Ovary (tissue), 10 donors: ENCODE measurements at regions of chr21 and their contacts with region 1.

Region 1: DNA sequence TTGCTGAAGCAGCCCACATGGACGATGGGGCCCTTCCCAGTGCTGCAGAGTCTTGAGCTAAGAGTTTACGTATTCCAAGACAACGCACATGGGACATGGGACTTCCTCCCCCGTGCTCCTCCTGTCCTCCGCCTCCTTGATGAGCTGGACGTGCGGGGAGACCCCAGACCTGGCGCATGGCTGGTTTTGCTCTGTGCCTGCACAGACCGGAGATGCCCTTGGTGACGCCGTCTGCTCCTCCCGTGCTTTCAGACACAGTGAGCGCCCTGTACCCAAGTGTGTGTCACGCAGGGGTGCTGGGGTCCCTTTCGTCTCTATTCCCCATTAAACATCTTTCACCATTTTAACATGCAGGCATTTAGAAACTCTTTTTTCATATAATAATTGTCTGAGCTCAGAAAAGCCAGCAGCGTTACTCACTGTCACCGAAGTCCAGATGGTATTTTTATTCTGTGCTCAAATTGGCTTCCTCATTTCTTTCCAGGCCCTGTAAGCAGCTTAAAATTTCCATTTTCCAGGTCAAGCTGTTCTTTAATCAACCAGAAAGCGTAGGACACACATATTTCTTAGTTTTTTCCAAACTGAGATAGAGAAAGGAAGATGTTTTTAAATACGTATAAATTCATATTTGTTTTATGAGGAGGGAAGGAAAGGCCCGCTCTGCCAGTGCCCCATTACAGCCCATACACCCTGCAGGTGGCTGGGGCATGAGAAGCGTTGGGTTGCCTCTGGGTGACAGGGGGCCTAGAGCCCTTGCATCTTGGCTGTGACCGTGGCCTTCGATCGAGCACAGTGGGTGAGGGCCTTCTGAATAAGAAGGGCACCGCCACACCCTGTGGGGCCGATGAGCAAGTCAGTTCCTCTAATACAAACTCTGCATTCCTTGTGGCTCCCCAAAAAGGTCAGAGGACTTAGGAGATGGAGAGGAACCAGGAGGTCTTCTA is 17.9 kb upstream of the ZBTB21 start:
- DNase-seq: peak in 1 of 5 donors; percentile 34
- H3K4me3 ChIP-seq: no peak overlapping the region
- H3K27ac ChIP-seq: no peak overlapping the region
- H3K4me1 ChIP-seq: peaks cover 5% of the 10 kb centered on the region
- H3K27me3 ChIP-seq: no peaks in the 10 kb centered on the region
- CTCF ChIP-seq: no peak
- EP300 ChIP-seq: no peak
- POLR2A ChIP-seq: no peak

Region 2: DNA sequence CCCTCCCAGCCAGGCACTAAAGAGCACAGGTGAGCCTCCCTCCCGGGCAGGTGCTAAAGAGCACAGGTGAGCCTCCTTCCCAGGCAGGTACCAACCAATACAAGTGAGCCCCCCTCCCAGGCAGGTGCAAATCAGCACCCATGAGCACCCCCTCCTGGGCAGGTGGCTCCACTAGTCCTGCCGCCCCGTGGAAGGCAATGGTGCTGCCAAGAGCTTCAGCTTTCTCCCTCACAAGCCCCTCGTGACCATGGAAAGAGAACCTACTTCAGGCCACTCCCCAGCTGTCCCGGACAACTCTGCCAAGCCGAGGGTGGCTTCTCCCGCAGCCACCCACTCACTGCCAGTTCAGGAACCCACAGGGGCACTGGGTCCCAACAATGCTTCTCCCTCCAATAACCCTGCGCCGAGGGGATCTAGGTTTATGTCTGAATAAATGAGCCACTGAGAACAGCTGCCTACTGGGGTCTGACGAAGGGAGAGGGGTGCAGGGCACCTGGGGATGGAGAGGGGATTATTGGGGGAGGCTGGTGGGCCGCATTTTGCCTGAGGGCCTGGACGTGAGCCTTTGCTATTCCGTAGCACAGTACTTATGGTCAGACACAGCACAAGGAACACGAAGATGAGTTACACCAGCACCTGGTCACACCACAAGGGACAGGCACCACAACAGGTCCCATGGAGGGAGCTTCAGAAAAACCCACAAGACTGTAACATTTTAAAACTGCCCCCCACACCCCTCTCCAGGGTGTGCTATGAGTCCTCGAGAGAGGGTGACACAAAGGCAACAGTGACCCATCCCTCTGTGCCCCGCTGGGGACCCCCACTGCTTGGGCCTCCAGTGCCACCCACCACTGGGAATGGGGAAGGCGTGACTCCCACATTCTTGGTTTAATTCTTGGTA is 195.2 kb before region 1 on chr21:
- intact Hi-C with region 1: no loop called
- DNase-seq: peak in 1 of 5 donors; percentile 27
- H3K4me3 ChIP-seq: no peak overlapping the region
- H3K27ac ChIP-seq: no peak overlapping the region
- H3K4me1 ChIP-seq: no peaks in the 10 kb centered on the region
- H3K27me3 ChIP-seq: no peaks in the 10 kb centered on the region
- CTCF ChIP-seq: no peak
- EP300 ChIP-seq: no peak
- POLR2A ChIP-seq: no peak

Region 3: GRCh38 chr21:42002421-42002958 is 25.6 kb before region 1 on chr21:
- intact Hi-C with region 1: loop called in 1 of 4 experiments (anchors 2 kb)
- DNase-seq: no peak
- H3K4me3 ChIP-seq: no peak overlapping the region
- H3K27ac ChIP-seq: no peak overlapping the region
- H3K4me1 ChIP-seq: no peaks in the 10 kb centered on the region
- H3K27me3 ChIP-seq: no peaks in the 10 kb centered on the region
- CTCF ChIP-seq: no peak
- EP300 ChIP-seq: no peak
- POLR2A ChIP-seq: no peak

Region 4: GRCh38 chr21:42974832-42975820 is 947.0 kb after region 1 on chr21:
- intact Hi-C with region 1: no loop called
- DNase-seq: peak in 3 of 5 donors; percentile 43 to 86 (median 65)
- H3K4me3 ChIP-seq: peak overlapping the region; percentile 79
- H3K27ac ChIP-seq: peak overlapping the region; percentile 99
- H3K4me1 ChIP-seq: no peaks in the 10 kb centered on the region
- H3K27me3 ChIP-seq: no peaks in the 10 kb centered on the region
- CTCF ChIP-seq: no peak
- EP300 ChIP-seq: no peak
- POLR2A ChIP-seq: peak; percentile 41

Region 5: GRCh38 chr21:43338951-43339350 is 1310.9 kb after region 1 on chr21:
- intact Hi-C with region 1: loop called in 1 of 4 experiments (anchors 5 kb)
- DNase-seq: peak in 1 of 5 donors; percentile 43
- H3K4me3 ChIP-seq: no peak overlapping the region
- H3K27ac ChIP-seq: no peak overlapping the region
- H3K4me1 ChIP-seq: peaks cover 5% of the 10 kb centered on the region
- H3K27me3 ChIP-seq: no peaks in the 10 kb centered on the region
- CTCF ChIP-seq: no peak
- EP300 ChIP-seq: no peak
- POLR2A ChIP-seq: no peak